H1 (cell line): ENCODE measurements at regions of chr6 and their contacts with region 1.

Region 1: DNA sequence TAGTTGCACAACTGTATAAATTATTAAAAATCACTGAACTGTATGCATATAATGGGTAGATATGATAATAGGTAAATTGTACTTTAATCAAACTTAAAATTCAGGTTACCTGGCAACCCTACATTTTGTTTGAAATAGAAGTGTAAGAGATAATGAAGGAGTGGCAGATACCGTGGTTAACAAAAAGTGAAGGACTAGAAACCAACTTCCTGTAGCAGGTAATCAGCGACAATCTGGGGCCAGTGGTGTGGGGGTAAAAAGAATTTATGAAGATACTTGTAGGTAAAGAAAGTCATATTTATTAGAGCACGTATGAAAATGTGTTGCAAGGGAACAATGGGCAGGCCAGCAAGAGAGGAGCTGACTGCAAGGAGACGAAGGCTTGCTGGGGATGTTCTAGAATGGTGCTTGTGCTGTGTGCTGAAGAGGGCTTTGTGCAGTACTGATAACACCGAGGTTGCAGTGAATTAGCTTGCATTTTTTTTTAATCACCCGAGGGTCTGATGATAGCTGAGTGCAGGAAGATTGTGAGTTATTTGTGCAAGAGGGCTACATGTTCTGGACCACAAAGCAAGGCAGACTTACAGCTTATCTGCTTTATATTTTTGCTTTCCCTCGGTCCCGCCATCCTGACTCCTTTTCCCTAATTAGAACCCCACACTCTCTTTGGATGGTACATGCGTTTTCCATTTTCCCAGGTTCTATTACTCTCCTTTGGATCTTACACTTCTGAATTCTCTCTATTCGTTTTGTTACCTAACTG is 4.6 kb upstream of the ENPP1 start:
- DNase-seq: no peak
- H3K4me3 ChIP-seq: no peak overlapping the region
- H3K27ac ChIP-seq: no peak overlapping the region
- H3K4me1 ChIP-seq: peaks cover 0 to 3% (median 0%) of the 10 kb centered on the region in 4 experiments; a peak in 1 of 7 replicates
- H3K27me3 ChIP-seq: no peaks in the 10 kb centered on the region; a peak in 1 of 7 replicates
- CTCF ChIP-seq: no peak
- EP300 ChIP-seq: no peak
- POLR2A ChIP-seq: no peak
- RAD21 ChIP-seq: no peak

Region 2: GRCh38 chr6:131787766-131788712 is 15.1 kb before region 1 on chr6:
- CTCF ChIA-PET with region 1: interaction called, 12 read pairs
- POLR2A ChIA-PET with region 1: interaction called, 4 read pairs
- DNase-seq: no peak
- H3K4me3 ChIP-seq: no peak overlapping the region
- H3K27ac ChIP-seq: no peak overlapping the region
- H3K4me1 ChIP-seq: 0 out of 7 replicates have a peak, but pooled peaks cover 0 to 2% (median 0%) of the 10 kb centered on the region in 4 experiments
- H3K27me3 ChIP-seq: no peaks in the 10 kb centered on the region
- CTCF ChIP-seq: peak in 2 of 3 experiments; percentile 17 to 28; a peak in 1 of 4 replicates
- EP300 ChIP-seq: no peak
- POLR2A ChIP-seq: no peak
- RAD21 ChIP-seq: peak; percentile 35 to 44

Region 3: GRCh38 chr6:131960371-131961133 is 157.4 kb after region 1 on chr6:
- CTCF ChIA-PET with region 1: no interaction called
- POLR2A ChIA-PET with region 1: no interaction called
- DNase-seq: no peak
- H3K4me3 ChIP-seq: no peak overlapping the region
- H3K27ac ChIP-seq: no peak overlapping the region
- H3K4me1 ChIP-seq: peaks cover 0 to under 1% (median under 1%) of the 10 kb centered on the region in 4 experiments; a peak in 4 of 7 replicates
- H3K27me3 ChIP-seq: no peaks in the 10 kb centered on the region
- CTCF ChIP-seq: no peak
- EP300 ChIP-seq: no peak
- POLR2A ChIP-seq: no peak
- RAD21 ChIP-seq: peak in 1 of 2 experiments; percentile 25; a peak in 2 of 4 replicates

Region 4: DNA sequence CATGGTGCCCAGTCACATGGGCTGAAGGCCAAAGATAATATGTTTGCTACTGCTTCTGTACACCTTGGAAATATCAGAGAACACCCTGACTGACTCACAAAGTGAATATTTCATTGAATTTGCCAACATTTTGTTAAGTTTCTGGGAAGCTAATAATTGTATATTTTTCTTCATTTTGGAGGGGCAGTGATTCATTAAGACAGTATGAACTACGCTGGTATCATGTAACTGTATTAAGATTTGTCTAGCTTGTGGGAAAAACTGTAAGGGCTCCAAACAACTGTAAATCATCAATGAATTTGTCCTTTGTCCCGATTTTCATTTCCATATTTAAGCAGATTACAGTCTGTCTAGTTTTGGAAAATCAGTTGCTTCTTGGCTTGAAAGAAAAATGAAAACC is 250.3 kb after region 1 on chr6:
- CTCF ChIA-PET with region 1: no interaction called
- POLR2A ChIA-PET with region 1: no interaction called
- DNase-seq: no peak
- H3K4me3 ChIP-seq: no peak overlapping the region
- H3K27ac ChIP-seq: no peak overlapping the region
- H3K4me1 ChIP-seq: no peaks in the 10 kb centered on the region
- H3K27me3 ChIP-seq: no peaks in the 10 kb centered on the region; a peak in 1 of 7 replicates
- CTCF ChIP-seq: no peak
- EP300 ChIP-seq: no peak
- POLR2A ChIP-seq: no peak
- RAD21 ChIP-seq: no peak